Activated naive CD8-positive, alpha-beta T cell treated with anti-CD3 and anti-CD28 coated beads, Interleukin-2, amount 10 ng/mL, durations not matched to agents 7 days and 5 days (primary cell): ENCODE measurements at regions of chr12 and their contacts with region 1.

Region 1: GRCh38 chr12:48851883-48852733 is at the start of gene DDX23:
- DNase-seq: peak; percentile 87
- ATAC-seq: peak; percentile 95
- H3K4me3 Mint-ChIP-seq: peak within 1 kb of the TSS; percentile 85
- H3K27ac Mint-ChIP-seq: peak within 1 kb of the TSS; percentile 92
- H3K4me1 Mint-ChIP-seq: peaks cover 29% of the 10 kb centered on the region
- H3K27me3 Mint-ChIP-seq: no peaks in the 10 kb centered on the region
- total RNA-seq, gene DDX23: 135 to 162 TPM

Region 2: GRCh38 chr12:48814262-48815125 is 37.6 kb before region 1 on chr12:
- POLR2A ChIA-PET with region 1: interaction called, 21 read pairs
- DNase-seq: peak; percentile 94
- ATAC-seq: peak; percentile 75
- H3K4me3 Mint-ChIP-seq: peak overlapping the region; percentile 94
- H3K27ac Mint-ChIP-seq: peak overlapping the region; percentile 79
- H3K4me1 Mint-ChIP-seq: peaks cover 24% of the 10 kb centered on the region
- H3K27me3 Mint-ChIP-seq: peaks cover 33% of the 10 kb centered on the region

Region 3: GRCh38 chr12:48865434-48866290 is 13.6 kb after region 1 on chr12 and contains the start of gene RND1:
- POLR2A ChIA-PET with region 1: interaction called, 25 read pairs
- DNase-seq: peak; percentile 76
- ATAC-seq: peak; percentile 95
- H3K4me3 Mint-ChIP-seq: peak within 1 kb of the TSS; percentile 86
- H3K27ac Mint-ChIP-seq: peak within 1 kb of the TSS; percentile 84
- H3K4me1 Mint-ChIP-seq: peaks cover 20% of the 10 kb centered on the region
- H3K27me3 Mint-ChIP-seq: peaks cover 21% of the 10 kb centered on the region
- total RNA-seq, gene RND1: 3.8 to 4.9 TPM

Region 4: DNA sequence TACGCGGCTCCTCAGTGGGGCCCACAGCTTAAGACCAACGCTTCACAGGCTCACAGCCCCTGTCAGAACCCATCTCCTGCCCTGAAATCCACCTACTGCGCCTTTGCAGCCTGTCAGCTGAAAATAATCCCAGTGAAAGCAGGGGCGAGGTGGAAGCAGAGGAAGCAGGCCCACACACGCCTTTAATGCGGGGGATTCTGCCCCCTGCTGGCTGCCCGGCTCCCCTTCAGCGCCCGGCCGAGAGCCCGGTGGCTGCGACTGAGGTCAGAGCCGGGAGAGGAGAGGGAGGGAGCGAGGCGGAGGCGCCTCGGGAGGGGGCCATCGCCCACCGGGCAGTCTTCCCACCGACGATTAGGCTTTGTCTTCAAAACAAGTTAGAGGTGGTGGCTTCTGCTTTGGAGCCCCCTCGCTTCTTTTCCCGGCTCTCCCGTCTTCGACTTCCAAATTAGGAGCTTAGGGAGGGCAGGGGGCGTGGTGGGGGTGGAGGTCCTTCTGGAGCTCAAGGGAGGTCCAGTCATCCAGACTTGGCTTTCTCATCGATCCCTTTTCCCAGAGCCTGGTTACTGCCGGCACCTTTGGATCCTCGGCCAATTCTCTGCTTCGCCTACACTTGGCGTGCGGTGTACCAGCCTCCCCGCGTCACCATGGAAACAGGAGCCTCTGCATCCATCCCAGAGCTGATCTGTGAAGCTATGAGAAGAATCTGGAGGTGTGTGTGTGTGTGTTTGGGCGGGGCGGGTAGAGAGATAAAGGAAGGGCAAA is 38.7 kb after region 1 on chr12:
- POLR2A ChIA-PET with region 1: interaction called, 22 read pairs
- DNase-seq: peak; percentile 86
- ATAC-seq: peak; percentile 99
- H3K4me3 Mint-ChIP-seq: peak overlapping the region; percentile 37
- H3K27ac Mint-ChIP-seq: peak overlapping the region; percentile 15
- H3K4me1 Mint-ChIP-seq: peaks cover 8% of the 10 kb centered on the region
- H3K27me3 Mint-ChIP-seq: peaks cover 25% of the 10 kb centered on the region

Region 5: GRCh38 chr12:48924617-48925303 is 72.7 kb after region 1 on chr12:
- POLR2A ChIA-PET with region 1: interaction called, 13 read pairs
- DNase-seq: peak; percentile 78
- ATAC-seq: peak; percentile 80
- H3K4me3 Mint-ChIP-seq: peak overlapping the region; percentile 92
- H3K27ac Mint-ChIP-seq: peak overlapping the region; percentile 90
- H3K4me1 Mint-ChIP-seq: peaks cover 21% of the 10 kb centered on the region
- H3K27me3 Mint-ChIP-seq: no peaks in the 10 kb centered on the region

Region 6: GRCh38 chr12:48934312-48934706 is 82.2 kb after region 1 on chr12:
- POLR2A ChIA-PET with region 1: interaction called, 10 read pairs
- DNase-seq: no peak
- ATAC-seq: no peak
- H3K4me3 Mint-ChIP-seq: peak overlapping the region; percentile 21
- H3K27ac Mint-ChIP-seq: peak overlapping the region; percentile 59
- H3K4me1 Mint-ChIP-seq: peaks cover 20% of the 10 kb centered on the region
- H3K27me3 Mint-ChIP-seq: no peaks in the 10 kb centered on the region

Region 7: DNA sequence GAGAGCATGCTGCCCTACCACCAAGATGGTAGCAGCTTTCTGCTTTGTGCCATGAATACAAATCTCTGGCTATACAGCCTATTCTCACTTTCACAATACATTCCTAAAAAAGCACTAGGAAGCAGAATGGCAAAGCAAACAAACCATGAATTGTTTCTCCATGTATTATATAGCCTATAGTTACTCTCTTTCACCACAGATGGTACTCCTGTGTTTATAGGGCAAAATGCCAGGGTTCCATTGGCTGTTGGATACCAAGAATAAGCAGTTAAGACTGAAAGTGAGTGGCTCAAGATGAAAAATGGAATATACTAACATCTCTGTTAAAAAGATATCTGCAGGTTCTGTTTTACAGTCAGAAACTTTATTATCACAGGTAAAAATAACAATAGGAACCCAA is 94.1 kb after region 1 on chr12:
- POLR2A ChIA-PET with region 1: no interaction called
- DNase-seq: no peak
- ATAC-seq: no peak
- H3K4me3 Mint-ChIP-seq: no peak overlapping the region
- H3K27ac Mint-ChIP-seq: no peak overlapping the region
- H3K4me1 Mint-ChIP-seq: peaks cover 21% of the 10 kb centered on the region
- H3K27me3 Mint-ChIP-seq: no peaks in the 10 kb centered on the region